ENCODE measurements at regions of chr17 and their contacts with region 1.

Region 1: DNA sequence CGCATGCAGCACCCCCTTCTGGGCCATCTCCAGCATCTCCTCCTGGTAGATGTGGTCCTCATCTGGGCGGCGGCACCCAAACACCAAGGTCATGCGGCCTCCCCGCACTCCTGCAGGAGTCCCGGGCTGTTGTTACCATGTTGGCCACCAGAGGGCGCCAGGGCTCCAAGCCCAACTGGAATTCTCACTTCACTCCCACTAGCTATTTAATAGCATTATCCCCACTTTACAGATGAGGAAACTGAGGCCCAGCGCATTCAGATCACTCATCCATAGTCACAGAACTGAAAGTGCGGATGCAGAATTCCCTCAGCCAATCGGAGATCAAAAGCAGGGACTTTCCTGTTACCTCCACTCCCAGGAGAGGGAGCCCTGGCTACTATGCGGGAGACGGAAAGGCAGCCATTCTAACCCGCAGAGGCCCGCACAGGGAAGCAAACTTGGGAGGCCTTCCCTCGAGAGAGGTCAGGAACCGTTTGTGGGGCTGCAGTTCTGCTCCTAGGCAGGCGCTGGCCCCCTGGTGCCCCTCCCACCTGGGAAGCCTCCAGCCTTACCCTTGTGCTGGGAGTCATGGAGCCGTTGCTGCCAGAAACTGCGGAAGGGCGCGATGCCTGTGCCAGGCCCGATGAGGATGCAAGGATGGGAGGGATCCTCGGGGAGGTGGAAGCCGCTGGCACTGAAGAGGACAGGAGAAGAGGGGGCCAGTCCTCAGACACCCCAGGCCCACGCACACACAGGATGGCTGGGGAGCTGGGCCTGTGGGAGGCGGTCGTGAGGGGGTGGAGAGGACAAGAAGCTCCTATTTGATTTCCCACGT is 40.1 kb downstream of the NOS2 start:
- DNase-seq: no peak
- H3K4me3 ChIP-seq: no peak overlapping the region
- H3K27ac ChIP-seq: no peak overlapping the region
- H3K27me3 ChIP-seq: peaks cover 2% of the 10 kb centered on the region
- CTCF ChIP-seq: peak; percentile 82

Region 2: GRCh38 chr17:27654654-27655524 is 105.4 kb before region 1 on chr17:
- CTCF ChIA-PET with region 1: interaction called, 109 read pairs
- POLR2A ChIA-PET with region 1: no interaction called
- DNase-seq: peak; percentile 6
- H3K4me3 ChIP-seq: no peak overlapping the region
- H3K27ac ChIP-seq: no peak overlapping the region
- H3K27me3 ChIP-seq: no peaks in the 10 kb centered on the region
- CTCF ChIP-seq: peak; percentile 76